ENCODE measurements at regions of chrX and their contacts with region 1.

Region 1: DNA sequence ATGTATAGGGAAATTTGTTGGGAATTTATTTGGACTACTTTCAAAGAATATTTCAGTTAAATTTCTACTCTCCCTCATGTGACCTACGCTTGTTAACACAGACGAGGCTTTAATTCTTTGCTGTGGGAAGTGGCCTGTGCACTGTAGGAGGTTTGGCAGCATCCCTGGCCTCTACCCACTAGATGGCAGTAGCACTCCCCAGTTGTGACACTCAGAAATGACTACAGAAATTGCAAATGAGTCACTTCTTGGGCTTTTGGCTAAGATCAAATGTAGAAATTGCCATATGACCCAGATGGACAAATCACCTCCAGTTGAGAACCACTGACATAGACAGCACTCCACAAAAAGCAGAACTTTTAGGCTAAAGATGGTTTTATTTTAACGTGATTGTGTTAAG is 22.1 kb downstream of the PIR start:
- DNase-seq: peak; percentile 71
- H3K4me3 ChIP-seq: no peak overlapping the region
- H3K27ac ChIP-seq: no peak overlapping the region
- H3K4me1 ChIP-seq: no peaks in the 10 kb centered on the region
- H3K27me3 ChIP-seq: no peaks in the 10 kb centered on the region
- CTCF ChIP-seq: peak; percentile 57 to 79 (median 63)
- EP300 ChIP-seq: no peak
- POLR2A ChIP-seq: no peak

Region 2: DNA sequence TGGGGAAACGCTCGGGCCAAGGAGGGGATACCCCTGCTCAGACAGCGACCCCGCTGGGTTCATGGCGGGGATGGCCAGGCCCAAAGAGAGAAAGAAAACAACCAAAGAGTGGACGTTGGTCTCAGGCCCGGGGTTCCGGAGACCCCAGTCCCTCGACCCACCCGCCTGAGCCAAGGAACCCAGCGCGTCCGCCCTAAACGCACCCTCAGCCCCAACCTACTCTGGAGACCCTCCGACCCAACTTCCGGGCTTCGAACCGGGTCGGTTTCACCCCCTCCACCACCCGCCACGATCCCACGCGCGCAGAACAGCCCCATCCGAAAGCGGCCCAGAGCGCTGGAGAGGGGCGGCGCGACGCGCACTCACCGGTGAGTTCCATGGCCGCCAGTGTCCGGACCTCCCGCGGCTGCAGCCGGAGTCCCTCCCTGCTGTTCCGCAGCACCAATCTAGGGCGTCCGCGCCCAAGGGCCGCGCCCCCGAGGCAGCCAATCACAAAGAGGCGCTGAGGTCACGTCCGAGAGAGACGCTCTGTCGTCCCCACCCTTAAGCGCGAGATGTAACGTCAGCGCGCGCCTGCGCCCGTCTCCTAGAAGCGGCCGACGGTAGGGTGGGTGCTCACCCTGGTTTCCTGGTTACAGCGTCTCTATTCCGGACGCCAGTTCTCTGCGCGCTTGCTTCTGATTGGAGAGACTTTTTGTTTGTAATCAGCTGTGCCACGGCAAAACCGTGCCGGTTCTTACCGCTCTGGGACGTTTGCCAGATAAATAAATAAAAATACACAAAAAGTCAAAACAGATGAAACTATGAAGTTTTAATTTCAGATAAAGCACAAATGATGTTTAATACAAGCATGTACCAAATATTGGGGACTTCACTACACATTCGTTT is 135.6 kb before region 1 on chrX and contains the start of gene PIGA:
- in situ Hi-C with region 1: loop called in 3 of 4 experiments (anchors 10 to 25 kb)
- intact Hi-C with region 1: loop called (anchors 5 kb)
- DNase-seq: peak; percentile 95
- H3K4me3 ChIP-seq: peak within 1 kb of the TSS; percentile 54 to 89 (median 66)
- H3K27ac ChIP-seq: peak within 1 kb of the TSS; percentile 79 to 93 (median 88)
- H3K4me1 ChIP-seq: peaks cover 0 to 8% (median 2%) of the 10 kb centered on the region in 4 donors
- H3K27me3 ChIP-seq: no peaks in the 10 kb centered on the region
- CTCF ChIP-seq: no peak
- EP300 ChIP-seq: no peak
- POLR2A ChIP-seq: peak; percentile 96
- total RNA-seq, gene PIGA: 6.6 to 53.9 (median 12.7) TPM

Region 3: DNA sequence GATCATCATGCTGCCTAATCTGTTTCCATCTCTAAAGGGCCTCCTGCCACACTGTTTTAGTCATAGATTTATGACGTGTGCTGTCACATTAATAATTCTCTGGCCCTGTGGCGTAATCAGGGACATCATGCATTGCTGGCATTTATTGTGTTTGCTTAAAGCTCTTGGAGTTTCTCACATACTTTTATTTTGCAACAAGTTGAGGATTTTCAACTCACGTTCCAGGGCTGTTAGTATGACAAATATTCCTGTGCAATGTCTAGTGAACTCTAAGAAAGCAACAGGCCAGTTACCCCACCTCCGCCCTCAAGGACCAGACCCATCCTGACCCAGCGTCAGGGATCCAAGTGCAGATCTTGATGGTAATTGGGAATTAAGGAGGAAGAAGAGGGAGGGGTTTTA is 127.9 kb before region 1 on chrX:
- in situ Hi-C with region 1: loop called in 3 of 4 experiments (anchors 10 to 25 kb)
- intact Hi-C with region 1: loop called (anchors 5 kb)
- DNase-seq: no peak
- H3K4me3 ChIP-seq: no peak overlapping the region
- H3K27ac ChIP-seq: no peak overlapping the region
- H3K4me1 ChIP-seq: no peaks in the 10 kb centered on the region
- H3K27me3 ChIP-seq: no peaks in the 10 kb centered on the region
- CTCF ChIP-seq: no peak
- EP300 ChIP-seq: no peak
- POLR2A ChIP-seq: no peak

Region 4: GRCh38 chrX:15349046-15349445 is 122.0 kb before region 1 on chrX:
- in situ Hi-C with region 1: loop called in 3 of 4 experiments (anchors 10 to 25 kb)
- intact Hi-C with region 1: loop called (anchors 5 kb)
- DNase-seq: peak; percentile 13
- H3K4me3 ChIP-seq: no peak overlapping the region
- H3K27ac ChIP-seq: no peak overlapping the region
- H3K4me1 ChIP-seq: no peaks in the 10 kb centered on the region
- H3K27me3 ChIP-seq: no peaks in the 10 kb centered on the region
- CTCF ChIP-seq: peak; percentile 28 to 43 (median 40)
- EP300 ChIP-seq: no peak
- POLR2A ChIP-seq: no peak

Region 5: DNA sequence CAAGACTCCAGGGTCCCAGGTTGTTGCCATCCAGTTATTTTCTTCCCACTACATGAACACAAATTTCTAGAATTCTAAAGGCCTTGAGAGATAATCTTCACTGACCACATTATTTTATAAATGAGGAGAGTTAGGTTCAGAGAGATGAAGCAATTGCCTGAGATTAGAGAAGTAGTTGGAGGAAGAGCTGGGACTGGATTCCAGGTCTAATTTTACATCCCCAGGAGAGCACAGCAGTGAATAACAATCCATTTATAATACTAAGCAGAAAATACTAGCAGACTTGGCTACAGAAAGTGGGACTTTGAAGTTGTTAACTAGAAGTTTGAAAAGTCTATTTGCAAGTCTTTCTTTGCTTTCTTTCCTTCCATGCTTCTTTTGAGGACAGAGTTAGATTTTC is 947.6 kb after region 1 on chrX:
- in situ Hi-C with region 1: no loop called
- intact Hi-C with region 1: no loop called
- DNase-seq: no peak
- H3K4me3 ChIP-seq: no peak overlapping the region
- H3K27ac ChIP-seq: no peak overlapping the region
- H3K4me1 ChIP-seq: no peaks in the 10 kb centered on the region
- H3K27me3 ChIP-seq: no peaks in the 10 kb centered on the region
- CTCF ChIP-seq: no peak
- EP300 ChIP-seq: no peak
- POLR2A ChIP-seq: no peak

Region 6: DNA sequence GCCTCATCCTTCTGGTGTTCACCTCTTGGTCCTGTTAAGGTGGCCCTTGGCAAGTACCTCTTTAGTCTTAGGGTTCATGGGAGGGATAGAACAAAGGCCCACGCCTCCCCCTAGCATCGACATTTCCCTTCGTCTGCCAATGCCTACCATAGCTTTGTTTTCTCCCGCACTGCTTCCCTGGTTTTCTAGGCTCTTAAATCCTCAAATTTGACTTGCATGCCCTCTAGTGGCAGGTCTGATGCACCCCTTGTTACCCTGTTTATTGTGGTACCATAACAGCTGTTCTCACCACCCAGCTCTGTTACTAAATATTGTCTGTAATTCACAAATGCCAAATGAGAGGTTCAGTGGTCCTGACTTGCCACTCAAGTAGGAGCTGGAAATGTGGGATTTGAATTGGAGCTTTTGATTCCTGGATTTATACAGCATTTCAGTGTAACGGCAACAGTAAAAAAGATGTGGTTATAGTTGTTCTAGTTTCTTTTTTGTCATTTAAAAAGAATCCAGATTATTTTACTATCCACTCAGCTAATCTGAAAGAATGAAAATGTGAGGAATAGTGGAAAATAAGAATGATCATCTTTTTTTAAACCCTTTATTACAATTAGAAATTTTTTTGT is 1575.6 kb after region 1 on chrX:
- in situ Hi-C with region 1: no loop called
- intact Hi-C with region 1: no loop called
- DNase-seq: peak; percentile 67
- H3K4me3 ChIP-seq: no peak overlapping the region
- H3K27ac ChIP-seq: no peak overlapping the region
- H3K4me1 ChIP-seq: no peaks in the 10 kb centered on the region
- H3K27me3 ChIP-seq: no peaks in the 10 kb centered on the region
- CTCF ChIP-seq: peak; percentile 60 to 76 (median 67)
- EP300 ChIP-seq: no peak
- POLR2A ChIP-seq: no peak